ENCODE measurements at regions of chrX and their contacts with region 1.

Region 1: GRCh38 chrX:154397819-154398724 is at the start of gene RPL10:
- DNase-seq: peak; percentile 90
- ATAC-seq: peak; percentile 78
- H3K4me3 ChIP-seq: peak within 1 kb of the TSS; percentile 73
- H3K27ac ChIP-seq: peak within 1 kb of the TSS; percentile 97
- H3K4me1 ChIP-seq: peaks cover 3% of the 10 kb centered on the region; the same call in 1 of the 2 replicates
- H3K27me3 ChIP-seq: no peaks in the 10 kb centered on the region
- CTCF ChIP-seq: no peak
- EP300 ChIP-seq: no peak
- POLR2A ChIP-seq: peak; percentile 99
- RAD21 ChIP-seq: no peak
- polyA plus RNA-seq, gene RPL10: 5,383 to 7,222 TPM

Region 2: DNA sequence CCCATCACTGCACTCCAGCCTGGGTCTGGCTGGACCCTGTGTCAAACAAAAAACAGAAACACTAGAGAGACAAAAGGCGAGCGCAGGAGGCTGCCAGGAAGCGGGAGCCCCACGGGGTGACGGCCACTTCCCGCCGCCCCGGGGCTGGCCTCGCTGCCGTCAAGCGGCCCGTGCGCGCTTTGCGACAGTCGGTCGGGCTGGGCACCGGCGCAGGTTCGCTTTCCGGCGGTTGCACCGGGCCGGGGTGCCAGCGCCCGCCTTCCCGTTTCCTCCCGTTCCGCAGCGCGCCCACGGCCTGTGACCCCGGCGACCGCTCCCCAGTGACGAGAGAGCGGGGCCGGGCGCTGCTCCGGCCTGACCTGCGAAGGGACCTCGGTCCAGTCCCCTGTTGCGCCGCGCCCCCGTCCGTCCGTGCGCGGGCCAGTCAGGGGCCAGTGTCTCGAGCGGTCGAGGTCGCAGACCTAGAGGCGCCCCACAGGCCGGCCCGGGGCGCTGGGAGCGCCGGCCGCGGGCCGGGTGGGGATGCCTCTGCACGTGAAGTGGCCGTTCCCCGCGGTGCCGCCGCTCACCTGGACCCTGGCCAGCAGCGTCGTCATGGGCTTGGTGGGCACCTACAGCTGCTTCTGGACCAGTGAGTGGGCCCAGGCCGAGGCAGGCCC is 13.4 kb after region 1 on chrX and contains the start of gene TAFAZZIN:
- CTCF ChIA-PET with region 1: interaction called, 12 read pairs
- POLR2A ChIA-PET with region 1: interaction called, 22 read pairs
- RAD21 ChIA-PET with region 1: interaction called, 5 read pairs
- SMC1A ChIA-PET with region 1: interaction called, 4 read pairs
- in situ Hi-C with region 1: no loop called
- intact Hi-C with region 1: no loop called
- DNase-seq: no peak
- ATAC-seq: peak; percentile 80
- H3K4me3 ChIP-seq: peak within 1 kb of the TSS; percentile 81
- H3K27ac ChIP-seq: peak within 1 kb of the TSS; percentile 86
- H3K4me1 ChIP-seq: no peaks in the 10 kb centered on the region
- H3K27me3 ChIP-seq: no peaks in the 10 kb centered on the region
- CTCF ChIP-seq: peak in 1 of 3 experiments; percentile 8; a peak in 1 of 6 replicates
- EP300 ChIP-seq: no peak
- POLR2A ChIP-seq: peak; percentile 82
- RAD21 ChIP-seq: no peak
- polyA plus RNA-seq, gene TAFAZZIN: 0.71 to 1.4 TPM

Region 3: GRCh38 chrX:154428176-154429010 is 30.3 kb after region 1 on chrX and contains the start of gene ATP6AP1:
- CTCF ChIA-PET with region 1: interaction called, 5 read pairs
- POLR2A ChIA-PET with region 1: interaction called, 16 read pairs
- RAD21 ChIA-PET with region 1: interaction called, 4 read pairs
- SMC1A ChIA-PET with region 1: no interaction called
- in situ Hi-C with region 1: no loop called
- intact Hi-C with region 1: no loop called
- DNase-seq: peak; percentile 73
- ATAC-seq: peak; percentile 99
- H3K4me3 ChIP-seq: peak within 1 kb of the TSS; percentile 73
- H3K27ac ChIP-seq: 0 out of 2 replicates have a peak within 1 kb of the TSS, but pooled peaks have one; percentile 4
- H3K4me1 ChIP-seq: no peaks in the 10 kb centered on the region
- H3K27me3 ChIP-seq: no peaks in the 10 kb centered on the region
- CTCF ChIP-seq: no peak
- EP300 ChIP-seq: no peak
- POLR2A ChIP-seq: peak; percentile 87
- RAD21 ChIP-seq: no peak
- polyA plus RNA-seq, gene ATP6AP1: 4.5 to 7.8 TPM

Region 4: DNA sequence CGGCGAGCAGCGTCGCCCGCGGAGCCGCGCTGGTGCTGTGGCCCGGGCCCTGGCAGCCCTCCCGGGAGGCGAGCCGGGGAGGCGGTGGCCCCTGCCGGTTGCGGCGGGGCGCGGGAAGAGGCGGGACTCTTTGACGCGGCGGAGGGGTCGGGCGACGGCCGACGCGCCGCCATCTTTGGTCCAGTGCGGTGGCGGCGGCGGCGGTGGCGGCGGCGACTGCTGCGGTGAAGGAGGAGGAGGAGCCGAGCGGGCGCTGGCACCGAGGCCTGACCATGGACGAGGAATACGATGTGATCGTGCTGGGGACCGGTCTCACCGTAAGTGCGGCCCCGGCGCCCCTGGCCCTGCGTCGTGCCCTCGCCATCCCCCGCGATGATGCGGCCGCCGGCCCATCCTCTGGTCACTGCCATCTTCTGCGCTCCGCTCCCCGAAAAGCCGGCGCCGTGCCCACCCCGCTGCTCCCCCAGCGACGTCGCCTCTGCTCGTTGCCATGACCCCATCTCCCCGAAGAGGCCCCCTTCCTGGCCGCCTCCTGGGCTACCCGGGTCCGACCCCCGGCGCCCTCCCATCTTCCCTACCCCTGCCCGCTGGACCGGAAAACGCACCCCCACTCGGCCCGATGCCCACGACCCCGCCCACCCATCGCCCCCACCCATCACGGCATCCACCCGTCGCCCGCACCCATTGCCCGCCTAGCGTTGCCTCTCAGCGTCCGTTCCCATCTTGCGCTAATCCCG is 39.1 kb after region 1 on chrX and contains the start of gene GDI1:
- CTCF ChIA-PET with region 1: no interaction called
- POLR2A ChIA-PET with region 1: interaction called, 3 read pairs
- RAD21 ChIA-PET with region 1: no interaction called
- SMC1A ChIA-PET with region 1: no interaction called
- in situ Hi-C with region 1: no loop called
- intact Hi-C with region 1: loop called (anchors 5 kb)
- DNase-seq: no peak
- ATAC-seq: peak; percentile 64
- H3K4me3 ChIP-seq: peak within 1 kb of the TSS; percentile 74
- H3K27ac ChIP-seq: peak within 1 kb of the TSS; percentile 39
- H3K4me1 ChIP-seq: no peaks in the 10 kb centered on the region
- H3K27me3 ChIP-seq: no peaks in the 10 kb centered on the region
- CTCF ChIP-seq: no peak
- EP300 ChIP-seq: no peak
- POLR2A ChIP-seq: peak; percentile 69
- RAD21 ChIP-seq: no peak
- polyA plus RNA-seq, gene GDI1: 0.92 to 4.3 TPM

Region 5: DNA sequence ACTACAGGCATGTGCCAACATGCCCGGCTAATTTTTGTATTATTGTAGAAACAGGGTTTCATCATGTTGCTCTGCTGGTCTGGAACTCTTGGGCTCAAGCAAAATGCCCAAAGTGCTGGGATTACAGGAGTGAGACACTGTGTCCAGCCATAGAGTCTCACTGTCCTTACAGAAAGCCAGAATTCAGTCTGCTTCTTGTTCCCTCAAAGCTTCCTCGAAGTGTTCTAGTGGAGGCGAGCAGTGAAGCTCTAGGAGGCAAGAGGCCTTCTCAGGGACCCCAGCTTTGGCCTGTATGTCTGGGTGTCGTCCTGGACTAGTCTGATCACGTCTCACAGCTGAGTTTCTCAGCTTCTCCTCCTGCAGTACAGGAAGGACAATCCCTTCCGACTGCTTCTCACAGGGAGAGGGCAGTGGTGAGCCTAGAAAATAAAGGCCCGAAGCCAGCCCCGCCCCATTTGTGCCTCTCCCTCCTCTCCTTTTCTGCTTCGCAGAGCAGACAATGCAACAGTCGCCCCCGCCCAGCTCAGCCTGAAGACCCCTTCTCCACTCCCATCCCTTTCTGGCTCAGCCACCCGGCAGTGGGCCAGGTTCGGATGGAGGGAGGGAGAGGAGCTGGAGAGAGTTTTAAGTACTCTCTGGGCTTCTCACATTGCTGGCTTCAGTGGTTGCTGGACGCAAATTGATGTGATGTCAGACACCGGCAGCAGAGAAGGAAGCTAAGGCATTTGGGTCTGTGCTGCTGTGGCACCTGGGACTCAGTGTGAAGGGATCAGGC is 129.0 kb after region 1 on chrX:
- CTCF ChIA-PET with region 1: interaction called, 23 read pairs
- POLR2A ChIA-PET with region 1: interaction called, 3 read pairs
- RAD21 ChIA-PET with region 1: interaction called, 7 read pairs
- SMC1A ChIA-PET with region 1: interaction called, 7 read pairs
- in situ Hi-C with region 1: no loop called
- intact Hi-C with region 1: no loop called
- DNase-seq: peak; percentile 36
- ATAC-seq: peak; percentile 95
- H3K4me3 ChIP-seq: no peak overlapping the region
- H3K27ac ChIP-seq: peak overlapping the region; percentile 83
- H3K4me1 ChIP-seq: peaks cover 10% of the 10 kb centered on the region
- H3K27me3 ChIP-seq: no peaks in the 10 kb centered on the region
- CTCF ChIP-seq: peak; percentile 52 to 57 (median 55)
- EP300 ChIP-seq: no peak
- POLR2A ChIP-seq: peak; percentile 68
- RAD21 ChIP-seq: peak; percentile 27; the same call in 1 of the 2 replicates